T-cell (primary cell): ENCODE measurements at regions of chr14 and their contacts with region 1.

Region 1: DNA sequence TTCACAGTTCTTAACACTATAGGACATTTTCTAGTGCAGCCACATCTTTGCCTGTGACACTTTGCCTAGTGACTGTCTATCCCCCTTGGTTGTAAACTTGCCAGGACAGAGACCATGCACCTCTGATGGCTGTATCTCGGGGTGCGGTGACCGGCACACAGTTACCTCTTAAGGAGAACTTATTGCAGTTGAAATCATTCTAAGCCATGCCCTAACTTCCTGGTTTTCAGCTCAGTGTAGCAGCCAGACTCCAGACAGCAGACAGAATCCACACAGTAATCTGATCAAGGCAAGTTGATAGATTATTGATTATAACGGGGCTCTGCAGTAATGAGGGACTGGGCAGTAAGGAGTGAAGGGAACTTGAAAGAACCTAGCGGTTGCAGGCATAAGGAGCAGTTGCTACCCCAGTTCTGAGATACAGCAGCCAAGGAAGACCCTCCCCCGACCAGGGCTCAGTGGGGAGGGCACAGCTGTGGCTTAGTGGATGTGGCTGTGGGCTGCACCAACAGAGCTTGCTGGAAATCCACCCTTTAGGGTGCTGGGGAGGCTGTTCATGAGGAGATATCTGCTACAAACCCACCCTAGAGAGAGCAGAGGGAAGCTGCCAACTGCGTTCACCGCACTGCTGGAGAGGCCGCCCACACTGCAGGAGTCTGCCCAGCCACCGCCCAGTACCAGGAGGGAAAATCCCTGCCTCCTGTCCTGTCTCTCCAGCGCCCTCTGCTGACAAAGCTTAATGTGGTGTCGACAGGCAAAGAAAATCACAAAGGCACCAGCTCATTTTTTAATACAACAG is 58.2 kb upstream of the BEGAIN start:
- DNase-seq: peak; percentile 56 to 92 (median 79)
- ATAC-seq: peak; percentile 60 to 96 (median 74)
- H3K4me3 ChIP-seq: no peak overlapping the region
- H3K4me3 Mint-ChIP-seq: peak overlapping the region in 1 of 3 donors; percentile 39
- H3K27ac ChIP-seq: no peak overlapping the region
- H3K27ac Mint-ChIP-seq: peak overlapping the region; percentile 46 to 55
- H3K4me1 ChIP-seq: peaks cover 13 to 55% of the 10 kb centered on the region in 2 experiments
- H3K4me1 Mint-ChIP-seq: peaks cover 50 to 65% (median 55%) of the 10 kb centered on the region in 3 donors
- H3K27me3 ChIP-seq: peaks cover 0 to 9% of the 10 kb centered on the region in 2 experiments
- H3K27me3 Mint-ChIP-seq: no peaks in the 10 kb centered on the region

Region 2: GRCh38 chr14:100383727-100384158 is 261.6 kb before region 1 on chr14:
- CTCF ChIA-PET with region 1: interaction called, 7 to 29 read pairs
- POLR2A ChIA-PET with region 1: no interaction called
- DNase-seq: peak; percentile 24 to 83 (median 59)
- ATAC-seq: peak; percentile 83 to 89 (median 86)
- H3K4me3 ChIP-seq: no peak overlapping the region
- H3K4me3 Mint-ChIP-seq: no peak overlapping the region
- H3K27ac ChIP-seq: no peak overlapping the region
- H3K27ac Mint-ChIP-seq: no peak overlapping the region
- H3K4me1 ChIP-seq: peaks cover 0 to 13% of the 10 kb centered on the region in 2 experiments
- H3K4me1 Mint-ChIP-seq: peaks cover 17 to 28% (median 25%) of the 10 kb centered on the region in 3 donors
- H3K27me3 ChIP-seq: no peaks in the 10 kb centered on the region
- H3K27me3 Mint-ChIP-seq: no peaks in the 10 kb centered on the region

Region 3: DNA sequence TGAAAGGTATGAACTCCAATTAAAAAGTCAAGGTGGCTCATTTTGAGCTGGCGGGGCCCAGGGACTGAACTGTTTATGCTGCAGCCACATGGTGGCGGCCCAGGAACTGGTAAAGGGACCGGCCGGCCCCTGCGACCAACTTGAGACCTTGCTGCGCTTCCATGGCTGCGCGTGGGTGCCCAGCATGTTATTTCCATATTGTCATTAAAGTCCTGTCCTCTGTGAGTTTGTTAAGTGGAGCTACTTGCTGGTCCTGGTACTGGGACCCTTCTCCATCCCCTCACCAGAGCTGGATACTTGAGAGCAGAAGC is 120.5 kb before region 1 on chr14:
- CTCF ChIA-PET with region 1: interaction called in 1 of 2 experiments, 22 read pairs
- POLR2A ChIA-PET with region 1: no interaction called
- DNase-seq: peak in 10 of 35 experiments; percentile 0 to 51 (median 26)
- ATAC-seq: no peak
- H3K4me3 ChIP-seq: no peak overlapping the region
- H3K4me3 Mint-ChIP-seq: no peak overlapping the region
- H3K27ac ChIP-seq: no peak overlapping the region
- H3K27ac Mint-ChIP-seq: no peak overlapping the region
- H3K4me1 ChIP-seq: no peaks in the 10 kb centered on the region
- H3K4me1 Mint-ChIP-seq: no peaks in the 10 kb centered on the region
- H3K27me3 ChIP-seq: no peaks in the 10 kb centered on the region
- H3K27me3 Mint-ChIP-seq: no peaks in the 10 kb centered on the region

Region 4: DNA sequence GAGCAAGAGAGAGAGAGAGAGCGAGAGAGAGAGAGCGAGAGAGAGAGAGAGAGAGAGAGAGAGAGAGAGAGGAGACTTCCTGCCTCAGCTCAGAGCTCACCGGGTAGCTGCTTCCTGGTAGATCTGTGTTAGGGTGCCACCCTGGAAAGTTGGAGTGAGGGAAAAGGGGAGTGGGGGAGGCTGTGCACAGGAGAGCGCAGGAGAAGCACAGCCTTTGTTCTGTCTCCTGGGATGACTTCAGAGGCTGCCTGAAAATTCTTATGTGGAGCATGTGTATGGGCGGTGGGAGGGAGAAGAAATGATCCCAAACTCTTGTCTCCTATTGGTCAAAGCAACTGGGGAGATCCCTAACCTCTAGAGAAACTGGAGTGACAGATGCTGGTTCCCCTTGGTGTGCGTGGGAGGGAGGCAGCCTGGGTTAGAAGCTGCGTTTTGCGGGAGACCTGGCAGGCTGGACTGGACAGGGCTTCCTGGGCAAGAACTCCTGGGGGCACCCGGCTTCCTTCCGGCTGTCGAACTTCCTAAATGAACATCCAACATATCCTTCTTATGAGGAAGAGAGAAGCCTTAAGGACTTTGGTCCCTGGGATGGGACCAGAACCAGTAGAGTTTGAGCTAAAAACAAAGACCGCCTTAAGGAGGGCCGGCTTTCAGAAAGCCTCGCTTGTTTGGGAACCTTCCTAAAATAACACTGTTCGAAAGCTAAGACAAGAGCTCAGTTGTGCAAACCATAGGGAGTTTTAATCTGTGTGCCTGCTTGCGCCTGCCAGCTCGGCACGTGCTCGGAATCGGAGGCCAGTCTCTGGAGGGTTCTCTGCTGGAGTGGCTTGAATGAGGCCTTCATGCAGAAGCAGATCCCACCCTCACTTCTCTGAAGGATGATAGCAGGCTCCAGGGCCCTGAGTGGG is 27.7 kb before region 1 on chr14:
- CTCF ChIA-PET with region 1: interaction called in 1 of 2 experiments, 11 read pairs
- POLR2A ChIA-PET with region 1: no interaction called
- DNase-seq: peak in 1 of 35 experiments; percentile 49
- ATAC-seq: peak; percentile 51 to 63 (median 58)
- H3K4me3 ChIP-seq: no peak overlapping the region
- H3K4me3 Mint-ChIP-seq: peak overlapping the region in 1 of 3 donors; percentile 35
- H3K27ac ChIP-seq: no peak overlapping the region
- H3K27ac Mint-ChIP-seq: peak overlapping the region; percentile 64 to 79
- H3K4me1 ChIP-seq: peaks cover 0 to 25% of the 10 kb centered on the region in 2 experiments
- H3K4me1 Mint-ChIP-seq: peaks cover 18 to 25% (median 23%) of the 10 kb centered on the region in 3 donors
- H3K27me3 ChIP-seq: peaks cover 0 to 27% of the 10 kb centered on the region in 2 experiments
- H3K27me3 Mint-ChIP-seq: peaks cover 0 to 6% of the 10 kb centered on the region in 2 donors